Common myeloid progenitor, CD34-positive (primary cell): ENCODE measurements at regions of chr11 and their contacts with region 1.

Region 1: DNA sequence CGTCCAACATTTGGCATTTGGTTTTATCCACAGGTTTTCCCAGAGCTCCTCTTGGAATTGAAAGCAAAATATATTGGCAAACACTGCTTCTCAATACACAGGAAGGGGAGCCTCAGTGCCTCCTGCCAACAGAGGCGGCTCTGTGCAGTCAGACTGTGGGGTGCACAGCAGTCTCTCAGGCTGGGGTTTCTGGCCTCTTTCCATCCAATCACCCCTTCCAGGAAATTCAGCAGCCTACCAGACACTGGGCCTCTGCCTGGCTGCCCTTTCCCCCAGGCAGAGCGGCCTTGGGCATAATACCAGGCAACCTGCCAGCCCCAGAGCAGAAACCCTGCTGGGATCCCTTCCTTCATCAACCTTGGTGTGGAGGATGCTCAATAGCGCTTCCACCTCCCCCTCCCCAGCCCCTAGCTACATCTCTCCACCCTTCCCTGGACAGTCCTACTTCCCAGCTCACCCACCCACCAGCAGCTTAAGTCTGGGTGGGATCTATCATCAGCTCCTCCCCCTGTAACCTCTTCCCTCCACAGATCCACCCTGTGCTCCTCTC is 17.8 kb upstream of the RAPSN start:
- DNase-seq: no peak
- H3K4me3 ChIP-seq: no peak overlapping the region
- H3K27ac ChIP-seq: peak overlapping the region in 1 of 2 experiments; percentile 65
- H3K4me1 ChIP-seq: no peaks in the 10 kb centered on the region
- H3K27me3 ChIP-seq: no peaks in the 10 kb centered on the region

Region 2: GRCh38 chr11:47267876-47268275 is 198.9 kb before region 1 on chr11:
- CTCF ChIA-PET with region 1: no interaction called
- POLR2A ChIA-PET with region 1: no interaction called
- DNase-seq: no peak
- H3K4me3 ChIP-seq: peak overlapping the region in 1 of 7 experiments; percentile 79
- H3K27ac ChIP-seq: peak overlapping the region in 1 of 2 experiments; percentile 95
- H3K4me1 ChIP-seq: peaks cover 32 to 80% (median 77%) of the 10 kb centered on the region in 4 experiments
- H3K27me3 ChIP-seq: no peaks in the 10 kb centered on the region

Region 3: DNA sequence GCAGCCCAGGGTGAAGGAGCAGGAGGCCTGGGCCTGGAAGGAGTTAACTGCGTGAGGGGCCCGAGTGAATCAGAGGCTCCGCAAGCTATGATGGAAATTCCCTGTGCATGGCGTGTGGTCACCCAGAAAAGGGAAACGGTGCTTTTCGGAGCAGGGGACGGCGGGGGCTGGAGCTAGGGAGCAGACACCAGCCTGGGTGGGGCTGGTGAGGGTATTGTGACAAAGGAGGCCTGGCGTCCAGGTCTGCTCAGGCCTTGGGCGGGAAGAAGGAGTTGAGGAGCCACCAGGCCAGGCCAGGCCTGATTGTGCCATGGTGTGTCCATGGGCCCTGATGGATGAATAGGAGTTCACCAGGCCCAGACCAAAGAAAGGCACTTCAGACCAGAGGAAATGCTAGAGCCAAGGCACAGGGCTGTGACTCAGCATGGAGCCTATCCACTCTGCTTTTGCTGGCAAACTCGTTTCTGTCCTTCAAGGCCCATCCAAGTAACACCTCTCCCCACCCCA is 75.6 kb before region 1 on chr11:
- CTCF ChIA-PET with region 1: no interaction called
- POLR2A ChIA-PET with region 1: no interaction called
- DNase-seq: peak in 2 of 3 donors; percentile 59 to 69
- H3K4me3 ChIP-seq: no peak overlapping the region
- H3K27ac ChIP-seq: no peak overlapping the region
- H3K4me1 ChIP-seq: peaks cover 9 to 84% (median 83%) of the 10 kb centered on the region in 4 experiments
- H3K27me3 ChIP-seq: no peaks in the 10 kb centered on the region

Region 4: DNA sequence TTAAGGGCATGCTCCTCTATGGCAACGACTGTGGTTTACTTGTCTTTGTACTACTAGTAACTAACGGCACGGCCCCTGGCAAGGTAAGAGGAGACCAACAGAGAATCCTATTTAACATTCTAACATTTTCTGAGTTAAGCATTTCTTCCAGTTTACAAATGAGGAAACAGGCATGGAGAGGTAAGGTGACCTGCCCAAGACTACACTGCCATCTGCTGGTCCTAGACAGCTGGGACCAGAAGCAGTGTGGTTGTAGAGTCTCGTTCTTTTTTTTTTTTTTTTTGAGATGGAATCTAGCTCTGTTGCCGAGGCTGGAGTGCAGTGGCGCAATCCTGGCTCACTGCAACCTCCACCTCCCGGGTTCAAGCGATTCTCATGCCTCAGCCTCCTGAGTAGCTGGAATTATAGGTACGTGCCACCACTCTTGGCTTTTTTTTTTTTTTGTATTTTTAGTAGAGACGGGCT is 12.6 kb before region 1 on chr11:
- CTCF ChIA-PET with region 1: interaction called, 11 read pairs
- POLR2A ChIA-PET with region 1: no interaction called
- DNase-seq: peak; percentile 87 to 95 (median 92)
- H3K4me3 ChIP-seq: peak overlapping the region in 1 of 7 experiments; percentile 29
- H3K27ac ChIP-seq: no peak overlapping the region
- H3K4me1 ChIP-seq: peaks cover 0 to 3% (median 0%) of the 10 kb centered on the region in 4 experiments
- H3K27me3 ChIP-seq: no peaks in the 10 kb centered on the region

Region 5: GRCh38 chr11:47523468-47524225 is 56.9 kb after region 1 on chr11:
- CTCF ChIA-PET with region 1: no interaction called
- POLR2A ChIA-PET with region 1: no interaction called
- DNase-seq: peak; percentile 52 to 72 (median 72)
- H3K4me3 ChIP-seq: peak overlapping the region in 2 of 7 experiments; percentile 17 to 48
- H3K27ac ChIP-seq: peak overlapping the region; percentile 52 to 82
- H3K4me1 ChIP-seq: peaks cover 11 to 53% (median 39%) of the 10 kb centered on the region in 4 experiments
- H3K27me3 ChIP-seq: no peaks in the 10 kb centered on the region